MCF 10A (cell line): ENCODE measurements at regions of chr5 and their contacts with region 1.

Region 1: GRCh38 chr5:119708076-119708790 is 78.9 kb downstream of the FAM170A start:
- DNase-seq: no peak
- H3K4me3 Mint-ChIP-seq: no peak overlapping the region
- H3K27ac Mint-ChIP-seq: no peak overlapping the region
- H3K4me1 Mint-ChIP-seq: no peaks in the 10 kb centered on the region
- H3K27me3 Mint-ChIP-seq: no peaks in the 10 kb centered on the region
- CTCF ChIP-seq: no peak

Region 2: DNA sequence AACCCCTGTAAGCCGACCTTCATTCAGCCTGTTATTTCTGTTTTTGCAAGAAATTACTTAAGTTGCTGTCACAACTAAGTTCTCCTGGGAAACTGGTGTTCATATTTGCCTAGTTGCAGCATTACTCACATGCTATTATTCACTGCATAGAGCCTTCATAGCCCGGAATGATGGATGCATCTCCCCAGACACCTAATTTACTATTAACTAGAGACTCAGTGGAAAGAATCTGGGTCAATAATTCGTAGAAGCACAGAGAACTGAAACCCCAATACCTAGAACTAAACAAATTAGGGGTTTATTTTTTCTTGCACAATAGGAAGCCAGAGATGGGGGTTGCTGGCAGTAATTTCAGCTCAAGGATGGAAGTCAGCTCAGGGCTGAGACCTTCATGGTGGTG is 124.5 kb before region 1 on chr5:
- CTCF ChIA-PET with region 1: no interaction called
- POLR2A ChIA-PET with region 1: no interaction called
- intact Hi-C with region 1: no loop called
- DNase-seq: no peak
- H3K4me3 Mint-ChIP-seq: no peak overlapping the region
- H3K27ac Mint-ChIP-seq: no peak overlapping the region
- H3K4me1 Mint-ChIP-seq: no peaks in the 10 kb centered on the region
- H3K27me3 Mint-ChIP-seq: no peaks in the 10 kb centered on the region
- CTCF ChIP-seq: no peak

Region 3: DNA sequence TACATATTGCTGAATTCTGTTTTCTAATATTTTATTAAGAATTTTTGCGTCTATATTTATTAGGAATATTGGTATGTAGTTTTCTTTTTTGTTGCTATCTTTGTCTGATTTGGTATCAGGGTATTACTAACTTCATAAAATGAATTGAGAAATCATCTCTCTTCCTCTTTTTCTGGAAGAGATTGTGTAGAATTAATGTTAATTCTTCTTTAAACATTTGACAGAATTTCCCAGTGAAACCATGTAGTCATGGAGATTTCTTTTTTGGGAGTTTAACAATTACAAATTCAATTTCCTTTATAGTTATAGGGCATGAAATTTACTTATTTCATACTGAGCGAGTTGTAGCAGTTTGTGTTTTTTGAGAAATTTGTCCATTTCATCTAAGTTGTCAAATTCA is 82.1 kb before region 1 on chr5:
- CTCF ChIA-PET with region 1: no interaction called
- POLR2A ChIA-PET with region 1: no interaction called
- intact Hi-C with region 1: loop called (anchors 10 kb)
- DNase-seq: no peak
- H3K4me3 Mint-ChIP-seq: no peak overlapping the region
- H3K27ac Mint-ChIP-seq: no peak overlapping the region
- H3K4me1 Mint-ChIP-seq: no peaks in the 10 kb centered on the region
- H3K27me3 Mint-ChIP-seq: no peaks in the 10 kb centered on the region
- CTCF ChIP-seq: no peak